ENCODE measurements at regions of chr2 and their contacts with region 1.

Region 1: DNA sequence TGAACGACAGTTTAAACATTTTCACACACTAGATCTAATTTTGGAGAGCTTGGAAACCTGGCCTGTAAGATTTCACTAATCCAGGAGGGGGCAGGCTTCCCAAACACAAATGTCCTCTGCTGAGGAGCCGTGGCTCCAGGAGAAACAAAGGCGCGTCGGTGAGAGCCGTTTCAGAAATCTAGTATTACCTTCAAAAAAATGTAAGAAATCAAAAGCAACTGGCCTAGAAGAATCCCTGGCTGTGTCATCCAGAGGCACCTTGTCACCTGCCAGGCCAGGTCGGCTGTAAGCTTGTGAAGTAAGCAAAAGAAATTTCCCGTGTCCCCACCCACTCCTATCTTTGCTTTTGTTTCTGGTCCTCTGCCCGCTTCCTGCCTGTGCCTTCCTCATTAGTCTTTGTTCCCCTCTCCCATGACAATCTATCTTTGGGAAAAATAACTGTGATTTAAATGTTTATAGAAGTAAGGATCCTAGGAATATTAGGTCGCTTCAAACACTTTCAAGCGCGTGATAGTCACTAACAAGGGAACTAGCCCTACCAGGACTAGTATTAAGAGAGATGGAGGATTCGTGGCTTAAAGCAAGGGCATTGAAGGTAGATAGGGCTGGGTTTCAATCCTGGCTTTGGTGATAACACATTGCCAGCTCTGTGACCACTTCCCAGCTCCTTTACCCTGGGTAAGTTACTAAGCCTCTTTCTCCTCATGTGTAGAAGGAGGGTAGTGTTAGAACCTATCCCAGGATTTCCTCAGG is 99.5 kb upstream of the STK39 start:
- DNase-seq: no peak
- H3K4me3 ChIP-seq: peak overlapping the region; percentile 28 to 69 (median 44)
- H3K27ac ChIP-seq: no peak overlapping the region
- H3K4me1 ChIP-seq: peaks cover 0 to 5% (median 0%) of the 10 kb centered on the region in 3 donors
- H3K27me3 ChIP-seq: peaks cover 0 to 14% (median 0%) of the 10 kb centered on the region in 4 donors
- CTCF ChIP-seq: peak; percentile 63 to 92 (median 88)
- POLR2A ChIP-seq: no peak

Region 2: DNA sequence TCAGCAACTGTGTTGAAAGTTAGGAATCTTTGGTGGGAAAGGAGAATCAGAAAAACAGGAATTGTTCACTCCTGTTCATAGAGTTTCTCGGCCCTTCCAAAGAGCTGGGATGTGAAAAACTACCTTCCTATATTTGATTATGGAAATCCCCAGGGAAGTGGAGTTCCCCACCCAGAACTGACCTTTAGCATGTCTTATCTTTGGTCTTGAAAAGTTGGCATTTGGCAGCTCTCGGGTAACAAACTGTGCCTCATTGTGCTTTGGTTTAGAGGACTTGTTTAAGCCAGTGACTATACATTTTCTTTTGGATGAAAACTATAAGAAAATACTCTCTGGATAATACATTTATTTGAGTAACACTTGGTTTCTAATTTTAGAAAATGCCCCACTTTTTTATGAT is 57.9 kb after region 1 on chr2:
- intact Hi-C with region 1: no loop called
- DNase-seq: no peak
- H3K4me3 ChIP-seq: no peak overlapping the region
- H3K27ac ChIP-seq: no peak overlapping the region
- H3K4me1 ChIP-seq: no peaks in the 10 kb centered on the region
- H3K27me3 ChIP-seq: no peaks in the 10 kb centered on the region
- CTCF ChIP-seq: no peak
- POLR2A ChIP-seq: no peak

Region 3: GRCh38 chr2:168687314-168687713 is 340.4 kb after region 1 on chr2:
- intact Hi-C with region 1: loop called (anchors 10 kb)
- DNase-seq: no peak
- H3K4me3 ChIP-seq: no peak overlapping the region
- H3K27ac ChIP-seq: no peak overlapping the region
- H3K4me1 ChIP-seq: no peaks in the 10 kb centered on the region
- H3K27me3 ChIP-seq: no peaks in the 10 kb centered on the region
- CTCF ChIP-seq: peak in 5 of 6 experiments; percentile 12 to 41 (median 24)
- POLR2A ChIP-seq: no peak

Region 4: DNA sequence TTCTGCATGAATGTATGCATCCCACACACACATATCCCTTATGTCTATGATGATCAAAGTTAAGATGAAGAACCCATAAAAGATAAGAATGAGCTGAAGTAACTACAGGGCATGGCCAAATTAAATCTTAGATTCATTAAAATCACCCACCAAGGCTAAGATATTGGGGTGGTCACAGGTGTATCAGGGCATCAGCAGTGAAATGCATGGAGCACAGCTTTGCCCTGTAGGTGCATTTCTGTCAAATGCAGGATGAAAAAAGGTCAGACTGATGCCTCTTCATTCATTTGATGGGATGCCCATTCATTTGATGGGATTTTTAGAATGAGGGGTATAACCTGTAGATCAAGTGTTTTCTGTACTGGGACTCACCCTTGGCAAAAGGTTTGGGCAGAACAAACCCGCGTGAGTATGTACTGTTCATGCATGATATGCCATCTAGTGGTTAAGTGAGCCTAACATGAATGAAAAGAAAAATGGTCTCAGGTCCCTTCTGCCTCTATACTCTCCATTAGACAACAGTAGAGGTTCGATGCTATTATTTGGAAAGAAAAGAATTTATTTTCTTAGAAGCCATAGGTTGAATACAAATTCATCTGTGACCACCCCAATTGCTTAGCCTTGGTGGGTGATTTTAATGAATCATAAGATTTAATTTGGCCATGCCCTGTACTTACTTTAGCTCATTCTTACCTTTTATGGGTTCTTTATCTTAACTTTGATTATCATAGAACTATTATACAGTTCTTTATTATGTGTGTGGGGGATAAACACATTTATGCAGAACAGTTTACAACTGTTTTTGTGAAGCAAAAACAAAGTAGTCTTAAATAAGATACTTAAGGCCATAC is 412.3 kb after region 1 on chr2:
- intact Hi-C with region 1: loop called (anchors 5 kb)
- DNase-seq: no peak
- H3K4me3 ChIP-seq: no peak overlapping the region
- H3K27ac ChIP-seq: no peak overlapping the region
- H3K4me1 ChIP-seq: no peaks in the 10 kb centered on the region
- H3K27me3 ChIP-seq: no peaks in the 10 kb centered on the region
- CTCF ChIP-seq: peak in 5 of 6 experiments; percentile 46 to 72 (median 57)
- POLR2A ChIP-seq: no peak

Region 5: GRCh38 chr2:168920504-168921157 is 573.7 kb after region 1 on chr2:
- intact Hi-C with region 1: loop called (anchors 5 kb)
- DNase-seq: no peak
- H3K4me3 ChIP-seq: no peak overlapping the region
- H3K27ac ChIP-seq: no peak overlapping the region
- H3K4me1 ChIP-seq: no peaks in the 10 kb centered on the region
- H3K27me3 ChIP-seq: peaks cover 0 to 5% (median 0%) of the 10 kb centered on the region in 4 donors
- CTCF ChIP-seq: peak; percentile 34 to 71 (median 62)
- POLR2A ChIP-seq: no peak